AG04450 (cell line): ENCODE measurements at regions of chr3 and their contacts with region 1.

Region 1: DNA sequence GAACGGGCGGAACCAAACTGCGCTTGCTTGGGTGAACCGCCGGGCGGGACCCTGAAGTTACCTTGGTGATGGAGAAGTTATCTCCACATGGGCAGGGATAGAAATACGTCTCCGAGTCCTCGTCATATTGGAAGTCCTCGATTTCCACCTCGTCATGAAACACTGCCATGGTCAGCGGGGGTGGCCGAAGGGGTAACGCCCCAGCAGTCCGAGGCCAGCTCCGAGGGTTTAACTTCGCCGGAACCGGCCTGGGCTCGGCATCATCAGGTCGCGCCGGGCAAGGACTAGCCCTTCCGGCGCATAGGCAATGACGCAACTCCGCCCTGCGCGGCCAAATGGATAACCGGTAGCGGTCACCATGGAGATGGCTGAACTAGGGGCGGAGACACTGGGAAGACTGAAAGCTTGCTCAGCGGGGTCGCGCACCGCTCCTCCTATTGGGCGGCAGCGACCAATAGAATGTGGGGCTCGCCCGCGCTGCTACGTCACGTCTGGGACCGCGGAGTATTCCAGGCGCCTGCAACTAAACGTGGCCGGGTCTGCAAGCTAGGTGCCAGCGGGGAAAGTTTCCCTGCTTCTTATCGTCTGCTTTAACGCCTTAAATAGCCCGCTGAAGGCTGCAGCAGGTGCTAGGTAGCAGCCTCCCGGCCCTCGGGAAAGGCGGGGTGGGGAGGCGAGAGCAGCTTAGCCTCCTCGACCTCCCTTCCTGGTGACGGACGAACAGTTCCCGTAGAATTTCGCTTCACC is at the starts of genes DPH3 and OXNAD1:
- DNase-seq: peak; percentile 99
- H3K4me3 ChIP-seq: peak within 1 kb of the TSS; percentile 92
- H3K27ac ChIP-seq: peak within 1 kb of the TSS; percentile 83
- H3K27me3 ChIP-seq: no peaks in the 10 kb centered on the region
- CTCF ChIP-seq: 0 out of 2 replicates have a peak, but pooled peaks have one; percentile 7
- polyA plus RNA-seq, gene DPH3: 27.7 and 31.4 TPM in 2 replicates
- polyA plus RNA-seq, gene OXNAD1: 7.9 and 9.0 TPM in 2 replicates

Region 2: GRCh38 chr3:15815696-15816095 is 449.2 kb before region 1 on chr3:
- CTCF ChIA-PET with region 1: interaction called, 13 read pairs
- POLR2A ChIA-PET with region 1: no interaction called
- DNase-seq: peak; percentile 54
- H3K4me3 ChIP-seq: no peak overlapping the region
- H3K27ac ChIP-seq: no peak overlapping the region
- H3K27me3 ChIP-seq: no peaks in the 10 kb centered on the region
- CTCF ChIP-seq: peak; percentile 54

Region 3: GRCh38 chr3:16290007-16290826 is 25.3 kb after region 1 on chr3:
- CTCF ChIA-PET with region 1: interaction called, 24 read pairs
- POLR2A ChIA-PET with region 1: no interaction called
- DNase-seq: peak; percentile 21
- H3K4me3 ChIP-seq: no peak overlapping the region
- H3K27ac ChIP-seq: no peak overlapping the region
- H3K27me3 ChIP-seq: no peaks in the 10 kb centered on the region
- CTCF ChIP-seq: peak; percentile 84

Region 4: DNA sequence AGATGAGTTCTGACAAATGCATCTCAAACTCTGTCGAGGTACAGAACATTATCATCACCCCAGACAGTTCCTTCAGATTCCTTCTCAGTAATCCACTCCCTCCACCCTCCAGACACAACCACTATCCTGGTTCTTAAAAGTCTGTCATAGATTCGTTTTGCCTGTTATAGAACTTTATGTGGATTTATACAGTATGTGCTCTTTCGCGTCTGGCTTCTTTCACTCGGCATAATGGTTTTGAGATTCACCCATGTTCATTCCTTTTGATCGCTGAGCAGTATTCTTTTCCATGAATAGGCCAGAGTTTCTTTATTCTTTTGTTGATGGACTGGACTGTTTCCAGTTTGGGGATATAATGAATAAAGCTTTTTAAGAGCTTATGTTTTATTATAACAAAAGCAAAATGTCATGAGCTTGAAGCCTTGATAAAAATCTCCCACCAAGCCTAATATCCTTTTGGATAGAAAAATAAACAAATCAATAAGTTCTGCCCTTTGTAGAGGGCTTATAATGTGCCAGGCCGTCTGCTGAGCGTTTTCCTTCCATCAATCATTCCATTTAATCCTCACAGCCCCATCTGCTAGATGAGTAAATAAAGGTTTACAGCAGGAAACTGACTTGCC is 269.9 kb after region 1 on chr3:
- CTCF ChIA-PET with region 1: interaction called, 14 read pairs
- POLR2A ChIA-PET with region 1: no interaction called
- DNase-seq: no peak
- H3K4me3 ChIP-seq: no peak overlapping the region
- H3K27ac ChIP-seq: no peak overlapping the region
- H3K27me3 ChIP-seq: peaks cover 38% of the 10 kb centered on the region
- CTCF ChIP-seq: no peak

Region 5: DNA sequence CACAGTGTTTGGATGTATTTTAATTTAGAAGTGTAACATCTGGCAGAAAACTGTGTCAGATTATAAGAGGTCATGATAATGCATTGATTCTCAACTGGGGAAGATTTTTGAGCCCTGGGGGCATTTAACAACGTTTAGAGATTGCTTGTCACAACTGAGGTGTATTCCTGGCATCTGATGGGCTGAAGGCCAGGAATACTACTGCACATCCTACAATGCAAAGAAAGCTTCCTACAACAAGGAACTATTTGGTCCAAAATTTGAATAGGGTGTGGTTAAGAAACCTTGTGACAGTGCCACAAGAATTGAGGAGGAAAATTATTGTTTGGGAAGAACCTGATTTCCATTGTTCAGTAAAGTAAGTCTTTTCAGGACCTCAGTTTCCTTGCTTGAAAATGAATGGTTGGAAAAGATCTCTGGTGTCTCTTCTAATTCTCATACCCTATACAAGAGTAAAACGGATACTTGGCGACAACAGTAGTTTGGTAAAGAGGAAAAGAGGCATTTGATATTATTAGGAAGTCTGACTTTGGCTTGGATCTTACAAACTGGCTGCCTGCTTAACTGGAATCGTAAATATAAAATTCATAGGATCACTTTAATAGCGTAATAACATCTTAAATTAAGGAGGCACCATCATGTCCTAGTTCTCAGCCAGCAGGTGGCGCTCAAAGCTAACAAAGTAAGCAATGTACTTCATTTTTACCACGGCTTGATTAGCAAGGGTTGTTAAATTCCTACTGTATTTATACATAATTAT is 336.1 kb after region 1 on chr3:
- CTCF ChIA-PET with region 1: interaction called, 12 read pairs
- POLR2A ChIA-PET with region 1: no interaction called
- DNase-seq: peak; percentile 68
- H3K4me3 ChIP-seq: no peak overlapping the region
- H3K27ac ChIP-seq: no peak overlapping the region
- H3K27me3 ChIP-seq: no peaks in the 10 kb centered on the region
- CTCF ChIP-seq: peak; percentile 83